CD4-positive, alpha-beta memory T cell (primary cell): ENCODE measurements at regions of chr14 and their contacts with region 1.

Region 1: GRCh38 chr14:56117765-56118610 is at the start of gene PELI2:
- DNase-seq: peak; percentile 86 to 91 (median 90)
- H3K4me3 ChIP-seq: peak within 1 kb of the TSS; percentile 45 to 72
- H3K4me3 Mint-ChIP-seq: peak within 1 kb of the TSS; percentile 94 to 99 (median 95)
- H3K27ac ChIP-seq: peak within 1 kb of the TSS; percentile 81
- H3K27ac Mint-ChIP-seq: peak within 1 kb of the TSS; percentile 97 to 99 (median 99)
- H3K4me1 ChIP-seq: peaks cover 39% of the 10 kb centered on the region
- H3K4me1 Mint-ChIP-seq: peaks cover 36 to 56% (median 43%) of the 10 kb centered on the region in 4 donors
- H3K27me3 ChIP-seq: no peaks in the 10 kb centered on the region
- H3K27me3 Mint-ChIP-seq: peaks cover 3 to 4% of the 10 kb centered on the region in 2 donors
- total RNA-seq, gene PELI2: 13.6 to 16.4 TPM

Region 2: DNA sequence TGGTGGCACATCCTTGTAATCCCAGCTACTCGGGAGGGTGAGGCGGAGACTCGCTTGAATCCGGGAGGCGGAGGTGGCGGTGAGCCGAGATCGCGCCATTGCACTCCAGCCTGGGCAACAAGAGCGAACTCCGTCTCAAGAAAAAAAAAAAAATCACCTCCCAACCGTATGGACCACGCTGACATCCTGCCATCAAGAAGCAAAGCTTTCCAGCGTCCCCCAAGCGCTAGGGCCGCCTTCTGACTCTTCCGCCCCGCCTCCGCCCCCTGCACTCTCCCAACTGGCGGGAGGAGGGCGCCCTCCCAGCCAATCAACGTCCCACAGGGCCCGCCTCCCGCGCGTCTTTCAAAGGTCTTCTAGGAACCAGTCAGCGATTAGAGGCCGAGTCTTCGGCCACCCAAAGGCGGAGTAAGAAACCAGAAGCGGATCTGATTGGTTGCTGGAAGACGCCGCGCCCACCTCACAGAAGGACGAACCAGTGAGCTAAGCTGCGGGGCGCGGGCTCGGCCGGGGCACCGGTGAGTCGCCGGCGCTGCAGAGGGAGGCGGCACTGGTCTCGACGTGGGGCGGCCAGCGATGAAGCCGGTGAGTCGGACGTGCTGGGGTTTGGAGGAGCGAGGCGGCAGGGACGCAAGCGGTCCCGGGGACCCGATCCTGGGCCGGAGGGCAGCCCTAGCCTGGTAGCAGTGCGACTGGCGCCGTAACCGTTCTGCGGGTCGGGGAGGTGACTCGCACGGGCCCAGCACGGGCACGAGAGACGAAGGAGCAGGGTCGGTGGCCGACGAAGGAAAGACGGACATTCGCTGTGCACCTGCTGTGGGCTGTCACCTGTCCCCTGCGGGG is 1721.3 kb before region 1 on chr14 and contains the start of gene CDKN3:
- CTCF ChIA-PET with region 1: no interaction called
- POLR2A ChIA-PET with region 1: no interaction called
- intact Hi-C with region 1: loop called (anchors 2 kb)
- DNase-seq: peak; percentile 97
- H3K4me3 ChIP-seq: peak within 1 kb of the TSS; percentile 69 to 73
- H3K4me3 Mint-ChIP-seq: peak within 1 kb of the TSS; percentile 87 to 92 (median 89)
- H3K27ac ChIP-seq: peak within 1 kb of the TSS; percentile 51
- H3K27ac Mint-ChIP-seq: peak within 1 kb of the TSS; percentile 57 to 96 (median 86)
- H3K4me1 ChIP-seq: peaks cover 18% of the 10 kb centered on the region
- H3K4me1 Mint-ChIP-seq: peaks cover 10 to 23% (median 15%) of the 10 kb centered on the region in 4 donors
- H3K27me3 ChIP-seq: no peaks in the 10 kb centered on the region
- H3K27me3 Mint-ChIP-seq: peaks cover under 1 to 3% of the 10 kb centered on the region in 2 donors
- total RNA-seq, gene CDKN3: 1.1 to 1.6 TPM

Region 3: DNA sequence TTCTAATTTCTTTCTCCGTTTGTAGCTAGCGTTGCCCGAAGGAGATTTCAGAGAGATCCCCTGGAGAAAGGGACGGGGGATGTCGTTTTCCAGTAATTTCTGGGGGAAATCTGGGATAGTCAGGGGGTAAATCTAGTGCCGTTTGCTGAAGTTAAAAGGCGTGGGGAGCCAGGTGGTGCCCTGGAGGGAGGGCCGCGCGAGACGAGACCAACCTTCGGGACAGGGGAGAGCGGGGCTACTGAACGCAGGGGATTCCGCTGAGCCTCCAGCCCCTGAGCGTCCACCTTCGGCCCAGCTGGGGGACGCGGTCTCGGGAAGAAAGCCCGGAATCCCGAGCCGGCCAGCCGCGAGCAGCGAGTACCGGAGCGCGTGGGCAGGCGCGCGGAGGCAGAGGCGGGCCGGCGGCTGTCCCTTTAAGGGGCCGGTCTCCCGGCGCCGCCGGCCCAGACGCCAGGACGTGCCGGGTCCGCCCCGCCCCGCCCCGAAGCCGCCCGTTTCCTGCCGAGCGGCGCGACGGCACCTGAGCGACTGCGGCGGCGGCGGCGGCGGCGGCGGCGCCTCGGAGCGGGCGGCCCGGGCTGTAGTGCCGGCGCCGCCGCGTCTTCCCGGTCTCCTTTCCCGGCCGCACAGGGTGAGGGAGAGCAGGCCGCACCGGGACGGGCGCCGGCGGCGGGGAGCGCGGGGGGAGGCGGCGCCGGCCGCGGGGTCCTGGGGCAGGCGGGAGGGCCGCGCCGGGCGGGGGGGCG is 538.1 kb before region 1 on chr14 and contains the start of gene KTN1:
- CTCF ChIA-PET with region 1: interaction called, 3 read pairs
- POLR2A ChIA-PET with region 1: interaction called, 3 read pairs
- intact Hi-C with region 1: loop called (anchors 1 kb)
- DNase-seq: peak; percentile 84 to 90 (median 87)
- H3K4me3 ChIP-seq: peak within 1 kb of the TSS; percentile 49 to 87
- H3K4me3 Mint-ChIP-seq: peak within 1 kb of the TSS; percentile 93 to 96 (median 94)
- H3K27ac ChIP-seq: peak within 1 kb of the TSS; percentile 64
- H3K27ac Mint-ChIP-seq: peak within 1 kb of the TSS; percentile 94 to 97 (median 95)
- H3K4me1 ChIP-seq: peaks cover 49% of the 10 kb centered on the region
- H3K4me1 Mint-ChIP-seq: peaks cover 24 to 28% (median 27%) of the 10 kb centered on the region in 4 donors
- H3K27me3 ChIP-seq: no peaks in the 10 kb centered on the region
- H3K27me3 Mint-ChIP-seq: no peaks in the 10 kb centered on the region
- total RNA-seq, gene KTN1: 126 to 133 TPM

Region 4: GRCh38 chr14:55964091-55964490 is 153.9 kb before region 1 on chr14:
- CTCF ChIA-PET with region 1: no interaction called
- POLR2A ChIA-PET with region 1: no interaction called
- intact Hi-C with region 1: loop called (anchors 5 kb)
- DNase-seq: no peak
- H3K4me3 ChIP-seq: no peak overlapping the region
- H3K4me3 Mint-ChIP-seq: no peak overlapping the region
- H3K27ac ChIP-seq: no peak overlapping the region
- H3K27ac Mint-ChIP-seq: no peak overlapping the region
- H3K4me1 ChIP-seq: no peaks in the 10 kb centered on the region
- H3K4me1 Mint-ChIP-seq: no peaks in the 10 kb centered on the region
- H3K27me3 ChIP-seq: no peaks in the 10 kb centered on the region
- H3K27me3 Mint-ChIP-seq: peaks cover 2 to 3% of the 10 kb centered on the region in 2 donors

Region 5: DNA sequence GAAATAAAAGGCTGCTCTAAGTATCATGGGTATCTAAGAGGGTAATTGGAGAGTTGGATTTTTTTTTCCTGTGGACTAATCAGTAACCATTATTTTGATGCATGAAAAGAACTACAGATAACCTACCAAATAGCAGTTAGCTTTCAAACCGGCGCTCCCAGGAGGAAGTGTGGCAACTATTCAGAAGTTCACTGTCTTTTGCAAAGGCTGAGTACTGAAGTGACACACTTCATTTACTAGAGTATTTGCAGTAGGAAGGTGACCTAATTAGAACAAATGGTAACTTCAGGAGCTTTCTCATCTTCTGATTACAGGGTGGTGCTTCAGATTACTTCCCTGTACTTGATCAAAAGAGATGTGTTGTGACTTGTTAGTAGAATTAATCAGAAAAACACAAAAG is 87.9 kb after region 1 on chr14:
- CTCF ChIA-PET with region 1: no interaction called
- POLR2A ChIA-PET with region 1: no interaction called
- intact Hi-C with region 1: no loop called
- DNase-seq: no peak
- H3K4me3 ChIP-seq: no peak overlapping the region
- H3K4me3 Mint-ChIP-seq: no peak overlapping the region
- H3K27ac ChIP-seq: no peak overlapping the region
- H3K27ac Mint-ChIP-seq: no peak overlapping the region
- H3K4me1 ChIP-seq: no peaks in the 10 kb centered on the region
- H3K4me1 Mint-ChIP-seq: peaks cover 0 to 5% (median 2%) of the 10 kb centered on the region in 4 donors
- H3K27me3 ChIP-seq: no peaks in the 10 kb centered on the region
- H3K27me3 Mint-ChIP-seq: no peaks in the 10 kb centered on the region

Region 6: GRCh38 chr14:56339855-56340701 is 222.1 kb after region 1 on chr14:
- CTCF ChIA-PET with region 1: no interaction called
- POLR2A ChIA-PET with region 1: no interaction called
- intact Hi-C with region 1: loop called (anchors 5 kb)
- DNase-seq: peak in 4 of 5 donors; percentile 30 to 44 (median 36)
- H3K4me3 ChIP-seq: no peak overlapping the region
- H3K4me3 Mint-ChIP-seq: no peak overlapping the region
- H3K27ac ChIP-seq: no peak overlapping the region
- H3K27ac Mint-ChIP-seq: no peak overlapping the region
- H3K4me1 ChIP-seq: no peaks in the 10 kb centered on the region
- H3K4me1 Mint-ChIP-seq: no peaks in the 10 kb centered on the region
- H3K27me3 ChIP-seq: no peaks in the 10 kb centered on the region
- H3K27me3 Mint-ChIP-seq: no peaks in the 10 kb centered on the region

Region 7: GRCh38 chr14:57268161-57269069 is 1150.4 kb after region 1 on chr14 and contains the starts of genes AP5M1 and EXOC5:
- CTCF ChIA-PET with region 1: no interaction called
- POLR2A ChIA-PET with region 1: interaction called, 11 read pairs
- intact Hi-C with region 1: no loop called
- DNase-seq: peak; percentile 93 to 96 (median 93)
- H3K4me3 ChIP-seq: peak within 1 kb of the TSS; percentile 78 to 98
- H3K4me3 Mint-ChIP-seq: peak within 1 kb of the TSS; percentile 97 to 100 (median 99)
- H3K27ac ChIP-seq: peak within 1 kb of the TSS; percentile 88
- H3K27ac Mint-ChIP-seq: peak within 1 kb of the TSS; percentile 98 to 100 (median 99)
- H3K4me1 ChIP-seq: peaks cover 55% of the 10 kb centered on the region
- H3K4me1 Mint-ChIP-seq: peaks cover 45 to 76% (median 61%) of the 10 kb centered on the region in 4 donors
- H3K27me3 ChIP-seq: no peaks in the 10 kb centered on the region
- H3K27me3 Mint-ChIP-seq: no peaks in the 10 kb centered on the region
- total RNA-seq, gene AP5M1: 49.5 to 57.5 TPM
- total RNA-seq, gene EXOC5: 48.3 to 51.4 TPM